ENCODE measurements at regions of chr1 and their contacts with region 1.

Region 1: DNA sequence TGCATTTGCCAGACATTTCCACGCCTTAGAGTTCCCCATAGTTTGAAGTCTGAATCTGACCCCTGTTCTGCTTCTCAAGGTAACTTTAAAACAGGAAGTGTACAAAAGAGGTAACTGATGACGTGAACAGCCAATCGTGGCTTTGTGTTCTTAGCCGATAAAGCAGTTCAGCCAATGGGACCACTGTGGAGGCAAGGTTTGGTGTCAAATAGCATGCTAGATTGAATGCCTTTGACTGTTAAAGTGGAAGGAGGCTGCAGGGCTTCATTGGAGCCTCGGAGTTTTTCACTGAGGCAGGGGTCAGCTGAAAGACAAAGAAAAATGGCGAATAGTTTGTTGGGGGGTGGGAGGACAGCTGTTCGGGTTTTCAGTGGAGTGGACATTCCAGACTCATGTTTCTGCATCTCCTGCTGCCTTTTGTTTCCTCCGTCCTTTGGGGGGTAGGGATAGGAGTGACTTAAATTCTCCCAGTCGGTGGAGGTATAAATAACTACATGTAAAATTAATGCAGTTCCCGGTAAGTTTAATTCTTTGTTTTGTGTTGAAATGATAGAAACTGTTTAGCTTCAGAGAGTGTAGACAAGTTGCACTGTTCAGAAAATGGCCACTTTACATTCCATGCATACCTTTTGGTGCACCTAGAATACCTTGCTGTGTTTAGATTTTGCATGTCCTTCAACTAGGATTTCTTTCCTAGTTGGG is 17.7 kb downstream of the NFYC start:
- DNase-seq: peak; percentile 97
- ATAC-seq: peak; percentile 95
- H3K4me3 ChIP-seq: peak overlapping the region; percentile 63 to 85 (median 76)
- H3K27ac ChIP-seq: peak overlapping the region; percentile 96
- H3K4me1 ChIP-seq: peaks cover 67% of the 10 kb centered on the region
- H3K27me3 ChIP-seq: no peaks in the 10 kb centered on the region; a peak in 1 of 5 replicates
- CTCF ChIP-seq: no peak
- EP300 ChIP-seq: peak in 1 of 2 experiments; percentile 14; a peak in 1 of 4 replicates
- POLR2A ChIP-seq: peak; percentile 75 to 94
- RAD21 ChIP-seq: no peak

Region 2: DNA sequence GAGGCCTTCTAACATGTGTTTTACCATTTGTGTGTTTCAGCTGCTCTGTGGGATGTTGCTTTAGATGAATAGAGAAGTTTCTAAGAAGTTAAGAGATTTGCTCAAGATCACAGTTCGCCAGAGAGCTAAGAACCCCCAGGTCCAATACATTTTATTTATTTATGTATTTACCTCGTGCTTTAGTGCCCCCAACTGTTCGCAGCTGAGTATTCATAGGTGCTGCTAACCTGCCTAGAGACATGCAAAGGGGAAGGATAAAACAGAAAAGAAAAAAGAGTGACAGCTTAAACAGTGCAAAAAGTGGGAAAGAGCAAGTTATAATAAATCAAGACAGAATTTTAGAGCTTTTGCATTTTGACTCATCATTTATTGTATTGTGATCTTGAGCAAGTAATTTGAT is 13.4 kb after region 1 on chr1:
- CTCF ChIA-PET with region 1: no interaction called
- POLR2A ChIA-PET with region 1: interaction called, 11 read pairs
- in situ Hi-C with region 1: no loop called
- intact Hi-C with region 1: no loop called
- DNase-seq: no peak
- ATAC-seq: no peak
- H3K4me3 ChIP-seq: no peak overlapping the region
- H3K27ac ChIP-seq: no peak overlapping the region
- H3K4me1 ChIP-seq: peaks cover 43% of the 10 kb centered on the region
- H3K27me3 ChIP-seq: no peaks in the 10 kb centered on the region
- CTCF ChIP-seq: no peak
- EP300 ChIP-seq: no peak
- POLR2A ChIP-seq: no peak
- RAD21 ChIP-seq: no peak

Region 3: DNA sequence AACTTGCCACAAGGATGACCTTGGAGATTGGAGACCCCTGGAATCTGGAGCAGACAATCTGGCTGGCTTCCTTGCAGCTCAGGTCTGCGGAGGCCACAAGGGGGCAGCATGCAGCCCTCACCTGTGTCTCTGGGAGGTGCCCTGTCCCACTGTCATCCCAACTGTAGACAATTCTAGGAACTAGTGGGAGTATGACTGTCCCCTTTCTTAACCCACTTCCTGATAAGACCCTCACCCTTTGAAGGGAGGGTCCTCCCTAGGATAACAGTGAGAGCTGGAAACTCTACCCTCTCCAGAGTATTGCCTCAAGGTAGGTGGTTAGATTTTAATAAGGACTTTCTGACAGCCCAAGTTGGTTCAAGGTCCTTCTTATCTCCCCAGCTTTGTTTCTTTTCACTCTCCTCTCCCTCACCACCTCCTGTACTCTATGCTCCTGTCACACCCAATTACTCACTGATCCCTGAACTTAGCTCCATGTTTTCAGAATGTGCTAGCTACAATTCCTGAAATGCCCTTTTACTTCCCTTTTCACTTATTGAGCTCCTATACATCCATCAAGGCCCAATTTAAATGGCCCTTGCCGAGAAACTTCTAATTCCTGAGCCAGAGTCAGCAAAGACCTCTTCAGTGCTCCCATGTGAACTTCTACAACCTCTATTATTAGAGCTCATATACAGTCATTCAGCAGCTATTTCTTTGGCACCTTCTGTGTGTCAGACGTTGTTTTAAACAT is 65.2 kb after region 1 on chr1:
- CTCF ChIA-PET with region 1: no interaction called
- POLR2A ChIA-PET with region 1: no interaction called
- in situ Hi-C with region 1: no loop called
- intact Hi-C with region 1: no loop called
- DNase-seq: peak; percentile 36
- ATAC-seq: peak; percentile 83
- H3K4me3 ChIP-seq: no peak overlapping the region
- H3K27ac ChIP-seq: peak overlapping the region; percentile 35
- H3K4me1 ChIP-seq: peaks cover 19% of the 10 kb centered on the region
- H3K27me3 ChIP-seq: no peaks in the 10 kb centered on the region
- CTCF ChIP-seq: peak; percentile 90
- EP300 ChIP-seq: no peak
- POLR2A ChIP-seq: no peak
- RAD21 ChIP-seq: peak; percentile 66

Measured in HepG2 (cell line).